ENCODE measurements at regions of chr16 and their contacts with region 1.

Region 1: GRCh38 chr16:89217388-89218191 is at the start of gene ZNF778:
- DNase-seq: peak; percentile 96
- H3K4me3 Mint-ChIP-seq: peak within 1 kb of the TSS; percentile 92
- H3K27ac Mint-ChIP-seq: peak within 1 kb of the TSS; percentile 40
- H3K4me1 Mint-ChIP-seq: peaks cover 16% of the 10 kb centered on the region
- H3K27me3 Mint-ChIP-seq: peaks cover 2% of the 10 kb centered on the region
- total RNA-seq, gene ZNF778: 6.0 and 9.8 TPM in 2 replicates

Region 2: DNA sequence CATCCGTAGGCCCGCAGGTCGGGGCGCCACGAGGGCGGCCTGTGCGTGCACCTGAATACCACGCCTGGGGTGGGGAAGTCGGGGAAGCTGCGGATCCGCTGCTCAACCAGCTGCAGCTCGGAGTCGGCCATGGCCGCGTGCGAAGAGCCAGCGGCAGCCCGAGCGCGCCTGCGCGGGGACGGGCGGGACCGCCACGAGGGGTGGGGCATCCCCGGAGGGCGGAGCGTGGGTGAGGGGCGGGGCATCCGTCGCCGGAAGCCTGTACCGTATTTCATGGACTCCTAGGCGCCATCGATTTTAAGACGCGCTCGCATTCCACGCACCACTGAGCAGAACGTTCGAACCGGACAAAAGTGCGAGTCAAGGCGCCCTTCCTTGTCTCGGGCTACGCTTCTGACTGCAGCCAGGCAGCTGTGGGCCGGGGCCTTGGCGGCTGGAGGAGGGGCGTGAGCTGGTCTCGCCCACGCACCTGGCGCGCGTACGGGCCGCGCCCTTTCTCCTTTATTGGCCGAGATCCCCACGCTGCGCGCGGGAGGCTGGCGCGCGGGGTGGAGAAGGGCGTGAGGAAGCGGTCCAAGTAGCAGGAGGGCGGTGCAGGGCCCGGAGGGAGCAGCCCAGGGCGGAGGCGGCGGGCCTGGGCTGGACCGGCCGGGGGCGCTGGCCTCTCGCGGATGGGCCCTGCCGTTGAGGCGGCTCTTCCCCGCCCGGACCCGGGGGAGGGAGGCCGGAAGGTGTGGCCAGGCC is 405.6 kb before region 1 on chr16 and contains the start of gene APRT:
- intact Hi-C with region 1: loop called (anchors 5 kb)
- DNase-seq: peak; percentile 99
- H3K4me3 Mint-ChIP-seq: peak within 1 kb of the TSS; percentile 89
- H3K27ac Mint-ChIP-seq: peak within 1 kb of the TSS; percentile 95
- H3K4me1 Mint-ChIP-seq: peaks cover 15% of the 10 kb centered on the region
- H3K27me3 Mint-ChIP-seq: no peaks in the 10 kb centered on the region
- total RNA-seq, gene APRT: 312 and 314 TPM in 2 replicates

Region 3: GRCh38 chr16:88941913-88942909 is 275.4 kb before region 1 on chr16:
- intact Hi-C with region 1: loop called (anchors 1 kb)
- DNase-seq: peak; percentile 85
- H3K4me3 Mint-ChIP-seq: peak overlapping the region; percentile 40
- H3K27ac Mint-ChIP-seq: no peak overlapping the region
- H3K4me1 Mint-ChIP-seq: no peaks in the 10 kb centered on the region
- H3K27me3 Mint-ChIP-seq: peaks cover 42% of the 10 kb centered on the region

Region 4: GRCh38 chr16:89171463-89172170 is 46.0 kb before region 1 on chr16 and contains the start of gene CDH15:
- intact Hi-C with region 1: loop called (anchors 1 kb)
- DNase-seq: peak; percentile 96
- H3K4me3 Mint-ChIP-seq: peak within 1 kb of the TSS; percentile 78
- H3K27ac Mint-ChIP-seq: peak within 1 kb of the TSS; percentile 69
- H3K4me1 Mint-ChIP-seq: peaks cover 6% of the 10 kb centered on the region
- H3K27me3 Mint-ChIP-seq: peaks cover 4% of the 10 kb centered on the region
- total RNA-seq, gene CDH15: not detected in 2 replicates

Region 5: GRCh38 chr16:89507834-89508590 is 290.4 kb after region 1 on chr16 and contains the start of gene SPG7:
- intact Hi-C with region 1: loop called (anchors 2 kb)
- DNase-seq: peak; percentile 98
- H3K4me3 Mint-ChIP-seq: peak within 1 kb of the TSS; percentile 95
- H3K27ac Mint-ChIP-seq: peak within 1 kb of the TSS; percentile 95
- H3K4me1 Mint-ChIP-seq: peaks cover 27% of the 10 kb centered on the region
- H3K27me3 Mint-ChIP-seq: no peaks in the 10 kb centered on the region
- total RNA-seq, gene SPG7: 109 and 110 TPM in 2 replicates

Measured in activated CD4-positive, alpha-beta T cell treated with anti-CD3 and anti-CD28 coated beads, Interleukin-2, amount 10 ng/mL, durations not matched to agents 24 days and 14 days (primary cell).